Activated T-helper 2 cell treated with anti-CD3 and anti-CD28 coated beads, Interferon-gamma antibody, Interleukin-2, Interleukin-4, amounts not matched to agents 10 μg/mL and 5 μg/mL and 100 μg/mL, durations not matched to agents 14 hours and 24 hours and 36 hours (primary cell): ENCODE measurements at regions of chr1 and their contacts with region 1.

Region 1: GRCh38 chr1:147084273-147085096 is 87.8 kb downstream of the PRKAB2 start:
- DNase-seq: peak; percentile 71
- H3K4me3 Mint-ChIP-seq: peak overlapping the region; percentile 90
- H3K27ac Mint-ChIP-seq: peak overlapping the region; percentile 100
- H3K4me1 Mint-ChIP-seq: peaks cover 30% of the 10 kb centered on the region
- H3K27me3 Mint-ChIP-seq: peaks cover 70% of the 10 kb centered on the region

Region 2: GRCh38 chr1:147052677-147053076 is 31.8 kb before region 1 on chr1:
- intact Hi-C with region 1: no loop called
- DNase-seq: no peak
- H3K4me3 Mint-ChIP-seq: no peak overlapping the region
- H3K27ac Mint-ChIP-seq: no peak overlapping the region
- H3K4me1 Mint-ChIP-seq: peaks cover 6% of the 10 kb centered on the region
- H3K27me3 Mint-ChIP-seq: peaks cover 34% of the 10 kb centered on the region

Region 3: GRCh38 chr1:147172168-147172992 is 87.9 kb after region 1 on chr1 and contains the start of gene PRKAB2:
- intact Hi-C with region 1: loop called (anchors 1 kb)
- DNase-seq: peak; percentile 87
- H3K4me3 Mint-ChIP-seq: peak within 1 kb of the TSS; percentile 96
- H3K27ac Mint-ChIP-seq: peak within 1 kb of the TSS; percentile 96
- H3K4me1 Mint-ChIP-seq: peaks cover 37% of the 10 kb centered on the region
- H3K27me3 Mint-ChIP-seq: peaks cover 5% of the 10 kb centered on the region
- total RNA-seq, gene PRKAB2: 9.1 and 9.5 TPM in 2 replicates